ENCODE measurements at regions of chr6 and their contacts with region 1.

Region 1: GRCh38 chr6:3162565-3163247 is 5.4 kb upstream of the TUBB2A start:
- DNase-seq: no peak
- H3K4me3 ChIP-seq: peak overlapping the region; percentile 83 to 89 (median 88)
- H3K27ac ChIP-seq: peak overlapping the region; percentile 99 to 100 (median 100)
- H3K4me1 ChIP-seq: peaks cover 19 to 48% (median 42%) of the 10 kb centered on the region in 4 donors
- H3K27me3 ChIP-seq: no peaks in the 10 kb centered on the region
- CTCF ChIP-seq: peak in 1 of 3 experiments; percentile 19
- EP300 ChIP-seq: no peak
- POLR2A ChIP-seq: peak; percentile 30

Region 2: DNA sequence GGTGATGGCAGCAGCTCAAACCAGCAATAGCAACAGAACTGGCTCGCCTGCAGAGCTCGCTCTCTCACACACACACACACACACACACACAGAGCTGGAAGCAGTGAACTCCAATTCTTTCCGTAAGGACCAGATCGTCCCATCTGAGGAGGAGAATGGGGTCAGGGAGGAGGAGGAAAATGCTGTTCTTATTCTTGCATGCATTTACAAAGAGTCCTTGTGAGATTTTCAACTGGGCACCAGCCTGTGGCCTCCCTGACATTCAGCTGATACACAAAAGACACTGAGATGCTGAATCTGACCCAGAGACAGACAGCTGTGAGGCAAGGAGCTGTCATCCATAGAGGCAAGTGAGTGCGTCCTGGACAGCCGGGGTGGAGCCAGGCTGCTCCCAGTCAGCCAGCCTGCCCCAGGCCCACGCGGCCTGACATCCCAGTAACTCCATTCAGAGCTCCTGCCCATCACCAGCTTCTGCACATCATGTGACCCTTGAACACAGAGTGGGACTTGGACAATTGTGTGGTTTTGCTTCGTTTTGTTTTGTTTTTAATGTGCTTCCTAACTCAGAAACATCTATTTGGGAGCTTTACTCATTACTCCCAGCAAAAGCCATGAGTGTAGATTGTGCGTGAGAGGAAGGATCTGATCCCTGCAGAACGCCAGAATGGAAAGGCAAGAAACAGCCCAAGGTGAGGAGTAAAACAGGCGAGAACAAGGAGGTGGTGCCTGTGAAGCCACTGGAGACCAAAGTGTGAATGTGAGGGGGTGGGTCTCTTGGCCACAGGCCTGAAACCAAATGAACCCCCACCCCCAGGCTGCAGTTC is 261.7 kb before region 1 on chr6:
- intact Hi-C with region 1: no loop called
- DNase-seq: peak; percentile 89
- H3K4me3 ChIP-seq: peak overlapping the region in 3 of 4 donors; percentile 15 to 84 (median 60)
- H3K27ac ChIP-seq: peak overlapping the region in 3 of 4 donors; percentile 14 to 90 (median 83)
- H3K4me1 ChIP-seq: peaks cover 19 to 36% (median 33%) of the 10 kb centered on the region in 4 donors
- H3K27me3 ChIP-seq: no peaks in the 10 kb centered on the region
- CTCF ChIP-seq: no peak
- EP300 ChIP-seq: no peak
- POLR2A ChIP-seq: no peak

Region 3: GRCh38 chr6:3231247-3232016 is 68.7 kb after region 1 on chr6:
- intact Hi-C with region 1: loop called (anchors 5 kb)
- DNase-seq: no peak
- H3K4me3 ChIP-seq: peak overlapping the region; percentile 61 to 75 (median 69)
- H3K27ac ChIP-seq: peak overlapping the region; percentile 78 to 90 (median 86)
- H3K4me1 ChIP-seq: peaks cover 41 to 61% (median 59%) of the 10 kb centered on the region in 4 donors
- H3K27me3 ChIP-seq: peaks cover 0 to 59% (median 18%) of the 10 kb centered on the region in 4 donors
- CTCF ChIP-seq: no peak
- EP300 ChIP-seq: no peak
- POLR2A ChIP-seq: no peak